Endothelial cell of umbilical vein (primary cell): ENCODE measurements at regions of chr2 and their contacts with region 1.

Region 1: GRCh38 chr2:197929008-197929885 is 124.9 kb downstream of the PLCL1 start:
- DNase-seq: peak; percentile 91
- H3K4me3 ChIP-seq: no peak overlapping the region
- H3K27ac ChIP-seq: peak overlapping the region; percentile 52
- H3K4me1 ChIP-seq: peaks cover 21% of the 10 kb centered on the region
- H3K27me3 ChIP-seq: no peaks in the 10 kb centered on the region
- CTCF ChIP-seq: no peak
- POLR2A ChIP-seq: no peak

Region 2: DNA sequence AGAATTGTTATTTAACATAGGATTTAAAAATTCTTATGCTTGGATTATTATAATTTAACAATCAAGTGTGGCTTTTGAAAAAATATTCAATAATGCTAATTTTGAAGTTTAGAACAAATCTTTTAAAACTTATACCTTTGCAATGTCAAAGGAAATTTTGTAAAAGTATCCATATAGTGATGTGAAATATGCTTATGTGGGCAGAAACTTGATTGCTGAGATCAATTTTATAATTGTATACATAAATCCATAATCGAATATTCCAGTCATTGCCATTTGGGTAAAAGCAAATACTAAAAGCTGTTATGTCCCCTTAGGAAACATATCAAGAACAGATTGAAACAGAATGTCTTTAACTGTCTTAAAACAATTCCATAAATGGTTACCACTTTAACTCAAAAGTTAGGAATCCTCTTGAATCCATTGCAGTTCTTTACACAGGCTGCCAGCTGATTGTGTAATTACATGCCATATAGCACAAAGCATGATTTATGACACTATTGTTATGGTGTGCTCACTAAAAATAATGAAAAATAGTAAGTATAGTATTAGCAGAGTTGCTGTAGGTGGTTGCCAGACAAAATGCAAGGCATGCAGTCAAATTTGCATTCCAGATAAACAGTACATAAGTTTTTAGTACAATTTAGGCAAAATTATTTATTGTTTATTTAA is 100.6 kb before region 1 on chr2:
- CTCF ChIA-PET with region 1: no interaction called
- POLR2A ChIA-PET with region 1: no interaction called
- dilution Hi-C with region 1: no loop called
- intact Hi-C with region 1: loop called (anchors 1 kb)
- DNase-seq: peak; percentile 91
- H3K4me3 ChIP-seq: no peak overlapping the region
- H3K27ac ChIP-seq: no peak overlapping the region
- H3K4me1 ChIP-seq: peaks cover 28% of the 10 kb centered on the region
- H3K27me3 ChIP-seq: no peaks in the 10 kb centered on the region
- CTCF ChIP-seq: no peak
- POLR2A ChIP-seq: no peak

Region 3: GRCh38 chr2:198116756-198117155 is 187.5 kb after region 1 on chr2:
- CTCF ChIA-PET with region 1: no interaction called
- POLR2A ChIA-PET with region 1: no interaction called
- dilution Hi-C with region 1: no loop called
- intact Hi-C with region 1: loop called (anchors 5 kb)
- DNase-seq: no peak
- H3K4me3 ChIP-seq: no peak overlapping the region
- H3K27ac ChIP-seq: no peak overlapping the region
- H3K4me1 ChIP-seq: peaks cover 11% of the 10 kb centered on the region
- H3K27me3 ChIP-seq: no peaks in the 10 kb centered on the region
- CTCF ChIP-seq: no peak
- POLR2A ChIP-seq: no peak